ENCODE measurements at regions of chr12 and their contacts with region 1.

Region 1: GRCh38 chr12:27534060-27534764 is 10.2 kb downstream of the PPFIBP1 start:
- DNase-seq: peak; percentile 70
- ATAC-seq: peak; percentile 77
- H3K4me3 Mint-ChIP-seq: peak overlapping the region; percentile 2
- H3K27ac Mint-ChIP-seq: peak overlapping the region; percentile 51
- H3K4me1 Mint-ChIP-seq: peaks cover 33% of the 10 kb centered on the region
- H3K27me3 Mint-ChIP-seq: no peaks in the 10 kb centered on the region
- CTCF ChIP-seq: no peak

Region 2: DNA sequence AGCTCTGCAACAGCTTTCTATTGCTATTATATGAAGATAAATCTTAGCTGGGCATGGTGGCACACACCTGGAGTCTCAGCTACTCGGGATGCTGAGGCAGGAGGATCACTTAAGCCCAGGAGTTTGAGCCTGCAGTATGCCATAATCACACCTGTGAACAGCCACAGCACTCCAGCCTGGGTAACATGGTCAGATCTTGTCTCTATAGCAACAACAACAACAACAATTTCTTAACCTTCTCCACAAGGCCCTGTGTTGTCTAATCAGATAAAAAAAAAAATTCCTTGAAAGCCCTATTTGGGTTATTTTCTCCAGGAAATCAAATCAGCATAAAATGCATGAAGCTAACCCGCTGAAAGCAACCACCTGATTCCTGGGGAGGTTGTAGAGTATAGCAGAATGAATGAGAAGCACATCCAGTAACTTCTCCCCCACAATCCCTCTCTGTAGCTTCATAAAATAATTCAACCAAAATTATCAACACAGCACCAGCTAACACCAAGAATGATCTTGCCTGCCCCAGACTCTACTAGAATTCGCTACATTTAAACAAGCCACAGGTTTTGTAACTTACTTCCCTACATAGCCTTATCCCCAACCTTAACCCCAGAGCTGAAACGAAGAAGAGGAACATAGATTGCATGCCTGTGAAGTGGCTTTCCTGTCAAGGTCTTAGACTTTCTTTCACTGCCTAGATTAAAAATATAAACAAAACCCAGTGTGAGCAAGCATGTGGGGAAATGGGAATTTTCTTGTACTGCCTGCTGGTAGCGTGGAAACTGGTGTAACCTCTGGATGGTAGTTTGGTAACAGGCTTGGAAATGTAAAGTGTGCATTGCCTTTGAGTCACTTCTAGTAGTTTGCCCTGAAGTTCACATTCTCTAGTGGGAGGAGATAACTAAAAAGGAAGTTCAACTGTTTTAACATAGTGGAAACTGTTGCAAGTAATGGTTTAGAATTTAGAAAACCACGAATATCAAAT is 296.1 kb before region 1 on chr12:
- CTCF ChIA-PET with region 1: no interaction called
- POLR2A ChIA-PET with region 1: no interaction called
- intact Hi-C with region 1: no loop called
- DNase-seq: no peak
- ATAC-seq: peak; percentile 75
- H3K4me3 Mint-ChIP-seq: peak overlapping the region; percentile 11
- H3K27ac Mint-ChIP-seq: peak overlapping the region; percentile 86
- H3K4me1 Mint-ChIP-seq: peaks cover 29% of the 10 kb centered on the region
- H3K27me3 Mint-ChIP-seq: no peaks in the 10 kb centered on the region
- CTCF ChIP-seq: no peak

Region 3: DNA sequence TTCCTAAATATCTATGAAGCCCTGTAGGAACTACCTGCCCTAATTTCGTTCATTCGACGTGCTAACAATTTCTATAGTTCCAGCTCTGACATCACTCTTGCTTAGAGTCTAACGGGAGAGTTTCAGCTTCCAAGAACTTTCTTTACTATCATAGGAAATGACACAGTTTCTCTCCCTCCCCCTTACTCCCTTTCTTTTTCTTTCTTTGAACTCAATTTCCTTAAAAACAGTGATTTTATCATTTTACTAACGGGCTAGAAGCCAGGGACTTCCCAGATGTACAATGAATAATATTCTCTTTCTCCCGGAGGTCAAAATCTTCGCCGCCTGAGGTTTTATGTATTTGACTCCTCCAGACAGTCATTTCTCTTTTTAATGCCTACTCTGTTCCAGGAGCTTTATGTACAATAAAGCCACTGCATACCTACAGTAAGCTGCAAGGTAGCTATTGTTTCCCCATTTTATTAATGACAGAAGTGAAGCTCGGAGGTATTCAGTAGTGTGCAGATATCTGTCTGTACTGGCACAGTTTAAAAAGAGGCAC is 72.0 kb before region 1 on chr12:
- CTCF ChIA-PET with region 1: no interaction called
- POLR2A ChIA-PET with region 1: no interaction called
- intact Hi-C with region 1: loop called (anchors 5 kb)
- DNase-seq: peak; percentile 18
- ATAC-seq: peak; percentile 31
- H3K4me3 Mint-ChIP-seq: no peak overlapping the region
- H3K27ac Mint-ChIP-seq: peak overlapping the region; percentile 16
- H3K4me1 Mint-ChIP-seq: peaks cover 49% of the 10 kb centered on the region
- H3K27me3 Mint-ChIP-seq: peaks cover 10% of the 10 kb centered on the region
- CTCF ChIP-seq: no peak

Region 4: GRCh38 chr12:27549801-27550652 is 15.8 kb after region 1 on chr12:
- CTCF ChIA-PET with region 1: interaction called, 3 read pairs
- POLR2A ChIA-PET with region 1: interaction called, 3 read pairs
- intact Hi-C with region 1: loop called (anchors 2 kb)
- DNase-seq: no peak
- ATAC-seq: no peak
- H3K4me3 Mint-ChIP-seq: no peak overlapping the region
- H3K27ac Mint-ChIP-seq: no peak overlapping the region
- H3K4me1 Mint-ChIP-seq: peaks cover 11% of the 10 kb centered on the region
- H3K27me3 Mint-ChIP-seq: peaks cover 14% of the 10 kb centered on the region
- CTCF ChIP-seq: no peak

Region 5: GRCh38 chr12:27610374-27610773 is 76.2 kb after region 1 on chr12:
- CTCF ChIA-PET with region 1: no interaction called
- POLR2A ChIA-PET with region 1: no interaction called
- intact Hi-C with region 1: no loop called
- DNase-seq: no peak
- ATAC-seq: no peak
- H3K4me3 Mint-ChIP-seq: no peak overlapping the region
- H3K27ac Mint-ChIP-seq: no peak overlapping the region
- H3K4me1 Mint-ChIP-seq: no peaks in the 10 kb centered on the region
- H3K27me3 Mint-ChIP-seq: no peaks in the 10 kb centered on the region
- CTCF ChIP-seq: no peak

Measured in activated CD8-positive, alpha-beta T cell treated with anti-CD3 and anti-CD28 coated beads for 36 hours (primary cell).